Right ventricle myocardium inferior (tissue), 1 donor: ENCODE measurements at regions of chr4 and their contacts with region 1.

Region 1: DNA sequence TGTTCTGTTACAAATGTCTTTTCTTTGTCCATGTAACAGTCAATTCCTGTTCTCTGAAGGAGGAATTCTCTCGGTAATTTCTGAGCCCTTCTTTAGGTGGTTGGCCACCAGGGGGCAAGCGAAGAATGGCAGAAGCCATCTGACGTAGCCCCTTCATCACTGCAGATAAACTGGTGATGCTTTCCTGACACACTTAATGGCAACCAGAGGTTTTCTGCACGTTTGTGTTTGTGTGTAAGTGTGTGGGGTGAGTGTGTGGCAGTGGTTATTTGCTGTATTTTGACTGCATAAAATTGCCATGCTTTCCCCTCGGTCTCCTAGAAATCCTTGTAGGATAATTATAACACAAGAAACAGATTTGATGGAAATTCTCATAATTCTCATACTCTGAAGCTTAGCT is 64.8 kb upstream of the STOX2 start:
- DNase-seq: peak; percentile 85
- ATAC-seq: peak; percentile 81

Region 2: GRCh38 chr4:183987987-183988392 is 147.7 kb after region 1 on chr4:
- intact Hi-C with region 1: loop called (anchors 10 kb)
- DNase-seq: peak; percentile 72
- ATAC-seq: peak; percentile 92

Region 3: GRCh38 chr4:184016759-184017668 is 176.7 kb after region 1 on chr4:
- intact Hi-C with region 1: loop called (anchors 10 kb)
- DNase-seq: no peak
- ATAC-seq: no peak

Region 4: GRCh38 chr4:184100297-184100885 is 260.1 kb after region 1 on chr4:
- intact Hi-C with region 1: loop called (anchors 1 kb)
- DNase-seq: peak; percentile 86
- ATAC-seq: peak; percentile 73

Region 5: DNA sequence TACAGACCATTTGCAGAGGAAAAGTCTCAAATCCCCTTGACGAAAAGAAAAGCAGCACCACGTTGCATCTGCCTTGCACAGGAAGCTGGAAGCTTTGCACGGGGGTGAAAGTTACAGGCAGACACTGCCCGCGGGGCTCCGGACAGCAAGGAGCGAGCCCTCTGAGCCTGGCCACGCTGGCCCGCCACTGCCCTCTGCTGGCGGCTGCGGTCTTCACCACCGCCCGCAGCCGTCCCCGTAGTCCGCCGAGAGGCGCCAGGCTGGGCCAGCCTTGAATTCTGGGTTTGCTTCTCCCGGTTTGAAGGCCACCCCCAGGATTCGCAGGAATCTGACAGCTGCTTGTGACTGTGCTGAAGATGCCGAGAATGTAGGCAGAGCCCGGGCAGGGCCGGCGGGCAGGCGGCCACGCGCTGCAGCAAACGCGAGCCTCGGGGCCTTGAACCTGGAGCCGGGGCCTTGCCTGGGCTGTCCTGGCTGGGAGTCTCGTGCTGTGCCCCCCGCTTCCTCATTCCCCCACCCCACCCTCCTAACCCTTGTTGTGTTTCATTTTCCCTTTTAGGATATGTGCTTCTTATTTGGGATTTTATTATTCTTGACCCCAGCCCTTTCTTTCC is 328.2 kb after region 1 on chr4:
- intact Hi-C with region 1: loop called (anchors 1 kb)
- DNase-seq: peak; percentile 91
- ATAC-seq: peak; percentile 96